K562 (cell line): ENCODE measurements at regions of chr17 and their contacts with region 1.

Region 1: DNA sequence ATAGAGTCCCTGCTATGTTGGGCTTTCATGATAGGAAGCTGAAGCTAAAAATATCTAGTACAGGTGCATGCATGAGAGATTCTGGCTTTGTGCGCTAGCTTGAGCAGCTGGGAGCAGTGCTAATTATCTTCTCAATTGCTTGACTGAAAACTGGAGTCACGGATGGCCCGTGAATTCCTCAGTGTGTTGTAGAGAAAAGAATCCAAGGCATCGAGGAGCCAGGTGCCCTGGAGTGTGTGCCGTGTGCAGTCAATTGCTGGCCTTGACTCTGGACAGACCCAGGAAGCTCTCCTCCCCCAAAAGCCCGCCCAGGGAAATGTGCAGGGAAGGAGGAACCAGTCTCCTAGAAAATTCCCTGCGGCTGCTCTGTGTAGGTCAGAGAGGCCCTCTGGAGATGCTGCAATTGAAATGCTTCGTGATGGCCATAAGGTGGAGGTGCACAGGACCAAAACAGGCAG is 14.2 kb downstream of the LGALS3BP start:
- DNase-seq: no peak
- ATAC-seq: no peak
- H3K4me3 ChIP-seq: no peak overlapping the region
- H3K27ac ChIP-seq: no peak overlapping the region
- H3K4me1 ChIP-seq: peaks cover 0 to 12% of the 10 kb centered on the region in 2 experiments; a peak in 2 of 5 replicates
- H3K27me3 ChIP-seq: peaks cover 38 to 86% of the 10 kb centered on the region in 2 experiments
- CTCF ChIP-seq: no peak
- EP300 ChIP-seq: no peak
- POLR2A ChIP-seq: no peak
- RAD21 ChIP-seq: no peak

Region 2: DNA sequence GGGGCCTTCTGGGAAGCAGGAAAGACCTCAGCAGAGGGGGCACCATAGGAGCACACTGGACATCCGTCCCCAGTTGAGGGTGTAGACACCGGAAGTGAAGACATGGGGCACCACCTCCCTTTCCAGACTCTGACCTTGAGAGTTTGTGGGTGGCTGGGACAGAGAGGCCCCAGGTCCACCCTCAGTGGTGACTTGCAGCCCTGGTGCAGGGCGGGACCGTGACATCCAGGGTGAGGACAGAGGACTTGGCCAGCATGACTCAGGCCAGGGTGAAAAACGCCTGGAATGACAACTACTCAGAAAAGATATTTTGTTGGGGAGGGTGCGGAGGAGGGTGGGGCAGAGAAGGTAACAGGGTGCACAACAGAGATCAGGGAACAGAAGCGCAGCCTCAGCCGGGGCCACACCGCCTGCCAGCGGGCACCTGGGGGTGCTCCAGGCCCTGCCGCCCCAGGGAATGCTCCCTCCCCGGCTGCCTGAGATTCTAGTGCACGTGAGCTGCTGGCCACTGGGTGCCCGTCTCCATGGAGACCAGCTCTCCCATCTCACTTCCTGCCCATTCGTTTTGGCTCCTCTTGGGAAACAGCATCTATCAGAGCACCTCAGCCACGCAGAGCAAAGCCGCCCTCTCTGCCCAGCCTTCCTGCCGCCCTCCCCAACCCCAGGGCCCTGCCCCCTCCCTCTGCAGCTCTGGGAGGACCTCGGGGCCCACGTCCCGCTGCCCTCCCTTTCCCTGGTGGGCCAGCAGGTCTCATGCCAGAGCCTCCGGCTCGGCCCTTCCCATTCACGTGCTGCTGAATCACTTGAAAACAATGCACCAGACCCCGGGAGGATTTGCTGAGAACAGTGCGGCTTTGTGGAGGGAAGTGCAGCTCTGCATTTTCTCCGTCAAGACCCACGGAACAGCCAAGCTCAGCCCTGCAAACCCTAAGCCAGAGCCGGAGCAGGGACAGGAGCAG is 82.1 kb before region 1 on chr17:
- CTCF ChIA-PET with region 1: no interaction called
- POLR2A ChIA-PET with region 1: no interaction called
- in situ Hi-C with region 1: loop called (anchors 5 kb)
- intact Hi-C with region 1: no loop called
- DNase-seq: peak; percentile 78 to 85 (median 82)
- ATAC-seq: peak; percentile 90
- H3K4me3 ChIP-seq: no peak overlapping the region
- H3K27ac ChIP-seq: peak overlapping the region; percentile 68; the same call in 2 of the 3 replicates
- H3K4me1 ChIP-seq: peaks cover 16 to 34% of the 10 kb centered on the region in 2 experiments
- H3K27me3 ChIP-seq: peaks cover 24 to 47% of the 10 kb centered on the region in 2 experiments; a peak in 4 of 5 replicates
- CTCF ChIP-seq: no peak
- EP300 ChIP-seq: peak; percentile 45; the same call in 1 of the 2 replicates
- POLR2A ChIP-seq: no peak
- RAD21 ChIP-seq: no peak